CD8-positive, alpha-beta memory T cell (primary cell): ENCODE measurements at regions of chr1 and their contacts with region 1.

Region 1: DNA sequence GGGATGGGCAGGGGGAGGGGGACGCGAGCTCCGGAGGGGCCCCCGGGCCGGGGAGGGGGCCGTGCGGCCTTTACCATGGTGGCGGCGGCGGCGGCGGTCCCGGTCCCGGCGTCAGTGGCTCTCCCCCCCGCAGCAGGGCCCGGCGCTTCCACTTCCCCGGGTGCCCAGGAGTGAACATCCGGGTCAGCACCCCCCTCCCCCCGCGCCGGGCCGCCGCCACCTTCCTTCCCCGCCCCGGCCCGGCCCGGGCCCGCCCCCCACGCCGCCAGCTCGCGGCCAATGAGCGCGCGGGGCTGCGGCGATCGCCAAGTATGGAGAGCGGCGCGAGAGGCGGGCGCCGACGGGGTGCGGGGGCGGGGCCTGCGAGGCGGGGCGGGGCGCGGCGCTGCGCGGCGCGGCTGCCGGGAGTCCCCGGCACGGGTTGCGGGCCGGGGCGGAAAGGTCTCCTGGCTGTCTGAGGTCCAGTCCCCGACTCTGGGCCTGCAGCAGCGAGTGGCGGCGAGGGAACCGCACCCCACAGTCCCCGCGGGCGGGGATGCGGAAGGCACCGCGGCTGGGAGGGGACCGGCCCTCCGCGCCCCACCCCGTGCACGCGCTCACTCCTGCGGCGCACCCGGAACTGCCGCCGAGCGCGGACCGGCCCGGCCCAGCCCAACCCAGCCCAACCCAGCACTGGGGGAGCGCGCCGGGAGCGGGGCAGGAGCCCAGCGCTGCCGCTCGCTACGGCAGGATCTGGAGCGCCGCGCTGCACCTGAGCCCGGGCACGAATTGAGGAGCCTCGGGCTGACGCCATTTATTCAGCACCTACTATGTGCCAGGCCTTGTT is at the start of gene CAPZB:
- DNase-seq: peak; percentile 89 to 96 (median 91)
- H3K4me3 ChIP-seq: peak within 1 kb of the TSS; percentile 64
- H3K4me3 Mint-ChIP-seq: peak within 1 kb of the TSS; percentile 92 to 99 (median 94)
- H3K27ac ChIP-seq: peak within 1 kb of the TSS; percentile 88
- H3K27ac Mint-ChIP-seq: peak within 1 kb of the TSS; percentile 93 to 98 (median 96)
- H3K4me1 ChIP-seq: peaks cover 62% of the 10 kb centered on the region
- H3K4me1 Mint-ChIP-seq: peaks cover 58 to 70% (median 69%) of the 10 kb centered on the region in 3 donors
- H3K27me3 ChIP-seq: no peaks in the 10 kb centered on the region
- H3K27me3 Mint-ChIP-seq: peaks cover 0 to 5% of the 10 kb centered on the region in 2 donors
- total RNA-seq, gene CAPZB: 284 to 289 TPM

Region 2: DNA sequence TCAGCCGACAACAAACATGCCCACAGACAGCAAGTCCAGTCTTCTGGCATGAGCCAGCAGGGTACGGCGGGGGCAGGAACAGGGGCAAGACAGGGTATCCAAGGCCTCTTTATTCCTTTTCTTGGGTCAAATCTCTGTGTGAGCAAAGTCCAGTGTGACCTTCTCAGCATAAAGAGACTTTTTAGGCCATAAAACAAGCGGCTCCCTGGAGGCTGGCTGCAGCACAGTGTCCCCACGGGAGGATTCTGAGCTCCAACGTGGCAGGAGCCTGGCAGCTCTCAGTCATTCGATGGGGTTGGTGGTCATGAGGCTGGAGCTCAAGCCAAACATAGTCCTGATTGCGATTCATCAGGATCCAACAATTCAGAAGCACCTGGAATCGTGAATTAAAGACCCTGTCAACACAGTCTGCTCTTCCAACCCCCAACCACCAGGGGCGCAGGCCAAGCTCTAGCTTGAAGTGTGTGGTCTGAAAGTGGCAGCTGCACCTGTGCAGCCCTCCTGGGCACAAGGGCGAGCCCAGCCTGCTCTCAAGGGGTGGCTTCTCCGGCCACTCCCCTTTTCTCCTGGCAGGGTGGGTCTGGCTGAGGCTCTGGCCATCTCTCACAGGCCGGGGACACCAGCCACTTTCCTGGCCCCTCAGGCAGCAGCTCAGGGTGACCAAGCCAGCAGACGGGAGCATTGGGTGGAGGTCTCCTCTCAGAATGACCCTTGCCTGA is 111.3 kb before region 1 on chr1:
- CTCF ChIA-PET with region 1: no interaction called
- POLR2A ChIA-PET with region 1: no interaction called
- DNase-seq: no peak
- H3K4me3 ChIP-seq: no peak overlapping the region
- H3K4me3 Mint-ChIP-seq: no peak overlapping the region
- H3K27ac ChIP-seq: no peak overlapping the region
- H3K27ac Mint-ChIP-seq: peak overlapping the region in 2 of 8 donors; percentile 35 to 72
- H3K4me1 ChIP-seq: no peaks in the 10 kb centered on the region
- H3K4me1 Mint-ChIP-seq: peaks cover 14 to 54% (median 16%) of the 10 kb centered on the region in 3 donors
- H3K27me3 ChIP-seq: no peaks in the 10 kb centered on the region
- H3K27me3 Mint-ChIP-seq: no peaks in the 10 kb centered on the region

Region 3: DNA sequence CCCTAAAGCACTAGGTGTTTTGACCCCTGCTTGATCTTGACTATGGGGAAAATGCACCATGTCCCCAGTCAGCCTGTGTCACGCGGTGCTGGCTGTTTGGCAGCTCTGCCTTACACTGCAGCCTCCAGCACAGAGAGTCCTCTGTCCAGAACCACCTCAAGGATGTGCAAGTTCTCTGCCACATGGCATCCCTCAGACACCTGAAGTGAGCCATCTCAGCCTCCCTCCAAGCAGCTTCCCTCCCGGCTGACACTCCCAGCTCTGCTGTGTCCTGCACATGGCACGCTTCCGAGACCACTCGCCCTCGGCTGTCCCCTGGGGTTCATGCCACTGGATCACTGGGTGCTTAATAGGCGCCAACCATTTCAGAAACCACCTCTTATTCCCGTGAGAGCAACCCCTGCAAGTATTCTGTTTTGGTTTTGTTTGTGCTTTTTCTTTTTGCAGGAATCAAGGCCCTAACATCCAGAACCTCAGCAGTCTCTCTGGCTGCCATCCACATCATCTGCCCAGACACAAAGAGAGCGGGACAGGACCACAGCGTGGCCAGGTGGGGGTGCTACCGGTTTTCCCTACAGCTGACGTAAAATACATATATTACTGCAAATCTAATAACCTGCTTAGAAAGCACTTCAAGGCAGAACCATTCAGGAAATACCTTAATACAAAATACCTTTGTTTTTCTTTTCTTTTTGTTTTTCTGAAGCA is 46.0 kb before region 1 on chr1:
- CTCF ChIA-PET with region 1: interaction called, 13 read pairs
- POLR2A ChIA-PET with region 1: interaction called, 3 read pairs
- DNase-seq: peak in 3 of 5 donors; percentile 37 to 63 (median 57)
- H3K4me3 ChIP-seq: no peak overlapping the region
- H3K4me3 Mint-ChIP-seq: peak overlapping the region in 1 of 7 donors; percentile 14
- H3K27ac ChIP-seq: no peak overlapping the region
- H3K27ac Mint-ChIP-seq: peak overlapping the region; percentile 63 to 89 (median 80)
- H3K4me1 ChIP-seq: peaks cover 70% of the 10 kb centered on the region
- H3K4me1 Mint-ChIP-seq: peaks cover 72 to 94% (median 94%) of the 10 kb centered on the region in 3 donors
- H3K27me3 ChIP-seq: no peaks in the 10 kb centered on the region
- H3K27me3 Mint-ChIP-seq: no peaks in the 10 kb centered on the region

Region 4: DNA sequence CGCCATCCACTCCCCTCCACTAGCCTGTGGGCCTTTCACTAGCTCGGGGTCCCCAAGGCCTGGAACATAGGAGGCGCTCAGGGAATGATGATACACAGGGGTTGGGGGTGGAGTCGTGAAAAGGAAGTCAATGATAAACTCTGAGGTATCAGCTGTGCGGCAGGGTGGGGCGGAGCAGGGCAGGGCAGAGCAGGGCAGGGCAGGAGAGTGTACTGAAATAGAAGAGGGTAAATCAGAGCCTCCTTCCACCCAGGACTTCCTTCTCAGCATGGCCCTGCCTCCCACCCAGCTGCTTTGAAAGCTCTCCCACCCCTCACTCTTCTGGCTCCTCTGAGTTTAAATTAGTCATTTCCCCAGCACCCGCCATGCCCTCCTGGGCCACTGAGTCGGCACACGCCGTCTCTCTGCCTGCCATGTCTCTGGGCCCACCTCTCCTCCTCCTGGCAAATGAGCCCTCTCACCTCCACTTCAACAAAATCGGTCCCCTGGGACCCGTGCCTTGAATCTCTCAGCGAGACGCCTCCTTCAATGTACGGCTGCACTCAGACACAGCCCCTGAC is 17.1 kb before region 1 on chr1:
- CTCF ChIA-PET with region 1: interaction called, 93 read pairs
- POLR2A ChIA-PET with region 1: interaction called, 13 read pairs
- DNase-seq: peak; percentile 43 to 80 (median 62)
- H3K4me3 ChIP-seq: peak overlapping the region; percentile 47
- H3K4me3 Mint-ChIP-seq: peak overlapping the region; percentile 67 to 89 (median 82)
- H3K27ac ChIP-seq: peak overlapping the region; percentile 53
- H3K27ac Mint-ChIP-seq: peak overlapping the region; percentile 87 to 99 (median 96)
- H3K4me1 ChIP-seq: peaks cover 95% of the 10 kb centered on the region
- H3K4me1 Mint-ChIP-seq: peaks cover 84 to 97% (median 97%) of the 10 kb centered on the region in 3 donors
- H3K27me3 ChIP-seq: no peaks in the 10 kb centered on the region
- H3K27me3 Mint-ChIP-seq: no peaks in the 10 kb centered on the region

Region 5: DNA sequence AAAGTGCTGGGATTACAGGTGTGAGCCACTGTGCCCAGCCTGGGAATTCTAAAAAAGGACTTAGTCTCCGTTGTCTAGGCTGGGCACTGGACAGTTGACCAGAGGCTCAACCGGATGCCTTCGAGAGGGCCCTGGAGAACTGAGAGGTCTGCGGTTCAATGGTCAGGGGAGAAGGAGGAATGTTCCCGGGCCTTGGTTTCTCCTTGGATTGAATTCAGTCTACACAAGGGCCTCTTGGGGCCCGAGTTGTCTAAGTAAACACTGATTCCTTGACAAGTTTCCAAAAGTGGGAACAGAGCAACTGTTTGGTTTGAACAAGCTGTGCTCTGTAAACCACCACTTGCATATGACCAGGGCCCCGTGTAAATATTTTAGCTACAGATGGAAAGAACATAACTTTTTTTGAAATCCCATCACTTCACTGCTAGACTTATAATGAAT is 28.8 kb after region 1 on chr1:
- CTCF ChIA-PET with region 1: no interaction called
- POLR2A ChIA-PET with region 1: no interaction called
- DNase-seq: no peak
- H3K4me3 ChIP-seq: no peak overlapping the region
- H3K4me3 Mint-ChIP-seq: no peak overlapping the region
- H3K27ac ChIP-seq: no peak overlapping the region
- H3K27ac Mint-ChIP-seq: no peak overlapping the region
- H3K4me1 ChIP-seq: no peaks in the 10 kb centered on the region
- H3K4me1 Mint-ChIP-seq: peaks cover 0 to 5% (median 1%) of the 10 kb centered on the region in 3 donors
- H3K27me3 ChIP-seq: no peaks in the 10 kb centered on the region
- H3K27me3 Mint-ChIP-seq: peaks cover 0 to 6% of the 10 kb centered on the region in 2 donors